Transverse colon (tissue), 4 donors: ENCODE measurements at regions of chr16 and their contacts with region 1.

Region 1: GRCh38 chr16:3880623-3881498 is at the start of gene CREBBP:
- DNase-seq: peak; percentile 89
- H3K4me3 ChIP-seq: peak within 1 kb of the TSS; percentile 69 to 96 (median 90)
- H3K27ac ChIP-seq: peak within 1 kb of the TSS; percentile 87 to 90 (median 90)
- H3K4me1 ChIP-seq: peaks cover 0 to 36% (median 27%) of the 10 kb centered on the region in 4 donors
- H3K27me3 ChIP-seq: no peaks in the 10 kb centered on the region
- CTCF ChIP-seq: no peak
- EP300 ChIP-seq: no peak
- POLR2A ChIP-seq: peak; percentile 26
- total RNA-seq, gene CREBBP: 52.4 to 235 (median 98.7) TPM

Region 2: GRCh38 chr16:3578610-3579551 is 302.0 kb before region 1 on chr16:
- in situ Hi-C with region 1: no loop called
- intact Hi-C with region 1: no loop called
- DNase-seq: peak; percentile 62
- H3K4me3 ChIP-seq: no peak overlapping the region
- H3K27ac ChIP-seq: peak overlapping the region in 2 of 4 donors; percentile 39 to 49
- H3K4me1 ChIP-seq: no peaks in the 10 kb centered on the region
- H3K27me3 ChIP-seq: peaks cover 8% of the 10 kb centered on the region
- CTCF ChIP-seq: no peak
- EP300 ChIP-seq: no peak
- POLR2A ChIP-seq: no peak

Region 3: GRCh38 chr16:3690470-3690928 is 190.4 kb before region 1 on chr16:
- in situ Hi-C with region 1: loop called in 3 of 4 experiments (anchors 5 to 25 kb)
- intact Hi-C with region 1: loop called (anchors 1 kb)
- DNase-seq: peak; percentile 89
- H3K4me3 ChIP-seq: peak overlapping the region in 1 of 4 donors; percentile 30
- H3K27ac ChIP-seq: peak overlapping the region; percentile 45 to 74 (median 62)
- H3K4me1 ChIP-seq: peaks cover 0 to 13% (median 2%) of the 10 kb centered on the region in 4 donors
- H3K27me3 ChIP-seq: no peaks in the 10 kb centered on the region
- CTCF ChIP-seq: peak; percentile 89 to 94 (median 93)
- EP300 ChIP-seq: no peak
- POLR2A ChIP-seq: no peak

Region 4: DNA sequence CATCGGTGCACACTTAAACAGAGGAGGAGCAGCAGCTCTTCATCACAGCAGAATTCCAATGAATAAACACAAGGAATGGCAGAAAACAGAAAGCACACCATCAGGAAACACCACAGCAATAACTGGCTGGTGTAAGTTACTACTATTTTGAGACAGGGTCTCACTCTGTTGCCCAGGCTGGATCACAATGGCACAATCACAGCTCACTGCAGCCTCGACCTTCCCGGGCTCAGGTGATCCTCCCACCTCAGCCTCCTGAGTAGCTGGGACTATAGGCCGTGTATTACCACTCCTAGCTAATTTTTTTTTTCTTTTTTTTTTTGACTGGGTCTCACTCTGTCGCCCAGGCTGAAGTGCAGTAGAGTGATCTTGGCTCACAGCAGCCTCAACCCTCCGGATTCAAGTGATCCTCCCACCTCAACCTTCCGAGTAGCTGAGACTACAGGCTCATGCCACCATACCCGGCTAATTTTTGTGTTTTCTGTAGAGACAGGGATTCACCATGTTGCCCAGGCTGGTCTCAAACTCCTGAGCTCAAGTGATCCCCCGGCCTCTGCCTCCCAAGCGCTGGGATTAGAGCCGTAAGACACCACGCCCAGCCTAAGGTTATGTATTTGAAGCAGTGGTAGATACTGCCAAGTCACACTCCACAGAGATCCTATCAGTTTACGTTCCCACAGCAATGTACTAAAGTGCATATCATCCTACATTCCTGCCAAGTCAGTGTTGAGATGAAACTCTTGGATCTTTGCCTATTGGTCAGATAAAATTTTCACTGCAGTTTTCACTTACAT is 184.2 kb before region 1 on chr16:
- in situ Hi-C with region 1: loop called in 3 of 4 experiments (anchors 5 to 25 kb)
- intact Hi-C with region 1: no loop called
- DNase-seq: no peak
- H3K4me3 ChIP-seq: no peak overlapping the region
- H3K27ac ChIP-seq: no peak overlapping the region
- H3K4me1 ChIP-seq: no peaks in the 10 kb centered on the region
- H3K27me3 ChIP-seq: no peaks in the 10 kb centered on the region
- CTCF ChIP-seq: no peak
- EP300 ChIP-seq: no peak
- POLR2A ChIP-seq: no peak

Region 5: DNA sequence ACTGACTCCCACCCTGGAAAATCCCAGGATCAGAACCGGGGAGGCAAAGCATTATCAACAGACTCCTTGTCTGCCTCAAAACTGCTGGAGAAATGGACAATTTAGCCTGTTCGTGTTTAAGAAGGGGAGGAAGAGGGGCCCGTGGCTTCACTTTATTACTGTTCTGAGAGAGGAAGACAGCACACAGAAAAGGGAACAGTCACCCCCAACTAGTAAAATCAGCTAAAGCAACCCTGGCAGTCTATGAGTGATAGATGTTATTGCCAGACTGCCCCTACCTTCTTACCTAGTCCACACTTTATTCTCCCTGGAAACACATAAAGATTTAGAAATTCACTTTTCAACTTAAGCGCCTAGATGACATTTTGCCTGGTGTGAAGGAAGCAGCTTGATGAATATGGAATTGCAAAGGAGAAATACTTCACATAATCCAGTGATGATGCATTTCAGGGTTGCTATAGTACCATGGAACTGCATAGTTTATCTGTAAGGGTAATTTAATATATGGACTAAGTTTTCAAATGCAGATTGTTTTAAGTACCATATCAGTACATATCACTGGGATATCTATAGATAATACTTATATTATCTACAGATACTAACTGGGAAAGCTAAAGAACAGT is 126.7 kb before region 1 on chr16:
- in situ Hi-C with region 1: no loop called
- intact Hi-C with region 1: loop called (anchors 10 kb)
- DNase-seq: no peak
- H3K4me3 ChIP-seq: no peak overlapping the region
- H3K27ac ChIP-seq: peak overlapping the region in 1 of 4 donors; percentile 23
- H3K4me1 ChIP-seq: no peaks in the 10 kb centered on the region
- H3K27me3 ChIP-seq: no peaks in the 10 kb centered on the region
- CTCF ChIP-seq: no peak
- EP300 ChIP-seq: no peak
- POLR2A ChIP-seq: no peak